WTC11 (cell line): ENCODE measurements at regions of chr15 and their contacts with region 1.

Region 1: DNA sequence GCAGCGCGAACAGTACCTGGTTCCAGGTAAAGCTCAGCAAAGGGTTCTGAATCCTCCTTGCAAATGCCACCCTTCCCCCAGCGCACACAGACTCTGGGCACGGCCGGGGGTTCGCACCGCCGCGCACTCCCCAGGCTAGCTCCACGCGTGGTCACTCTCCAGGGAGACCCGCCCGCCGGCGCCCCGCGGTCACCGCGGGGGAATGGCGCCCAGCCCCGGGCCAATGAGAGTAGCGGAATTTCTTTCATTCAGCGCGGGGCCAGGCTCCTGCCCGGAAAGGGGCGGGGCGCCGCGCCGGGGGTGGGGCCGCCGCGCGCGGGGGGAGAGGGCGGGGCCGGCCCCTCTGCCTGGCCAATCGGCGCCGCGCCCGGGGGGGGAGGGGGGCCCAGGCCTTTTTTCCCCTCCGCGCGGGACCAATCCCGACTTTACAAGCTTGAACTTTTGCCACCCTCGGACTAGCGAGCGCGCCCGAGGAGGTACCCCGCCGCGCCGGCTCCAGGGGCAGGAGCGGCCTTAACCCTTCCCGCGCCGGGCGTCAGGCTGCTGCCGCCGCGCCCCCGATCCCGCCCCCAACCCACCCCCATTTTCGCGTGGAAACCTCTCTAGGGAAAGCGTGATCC is 1.1 kb upstream of the SMAD6 start:
- DNase-seq: peak; percentile 93
- ATAC-seq: peak; percentile 55
- H3K4me3 Mint-ChIP-seq: peak overlapping the region; percentile 90
- H3K27ac Mint-ChIP-seq: 0 out of 2 replicates have a peak overlapping the region, but pooled peaks have one; percentile 12
- H3K4me1 Mint-ChIP-seq: peaks cover 37% of the 10 kb centered on the region
- H3K27me3 Mint-ChIP-seq: peaks cover 28% of the 10 kb centered on the region
- CTCF ChIP-seq: no peak

Region 2: DNA sequence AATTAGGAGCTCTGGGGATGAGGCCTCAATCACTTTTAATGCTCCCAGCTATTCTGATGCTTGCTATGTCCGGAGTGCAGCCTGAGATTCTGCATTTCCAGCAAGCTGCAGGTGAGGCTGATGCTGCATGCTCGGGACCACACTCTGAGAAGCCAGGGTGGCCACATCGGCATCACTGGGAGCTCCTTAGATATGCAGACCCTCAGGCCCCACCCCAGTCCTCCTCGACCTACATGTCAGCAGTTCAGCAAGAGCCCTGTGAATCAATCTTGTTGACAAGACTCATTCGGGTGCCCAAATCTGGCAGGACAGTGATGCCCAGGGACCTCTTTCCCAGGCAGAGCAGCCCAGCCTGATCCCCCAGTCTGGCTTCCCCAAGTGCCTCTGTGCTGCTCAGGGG is 91.0 kb before region 1 on chr15:
- CTCF ChIA-PET with region 1: interaction called, 11 read pairs
- POLR2A ChIA-PET with region 1: no interaction called
- DNase-seq: no peak
- ATAC-seq: peak; percentile 34; the same call in 1 of the 2 replicates
- H3K4me3 Mint-ChIP-seq: no peak overlapping the region
- H3K27ac Mint-ChIP-seq: no peak overlapping the region
- H3K4me1 Mint-ChIP-seq: peaks cover 5% of the 10 kb centered on the region; the same call in 1 of the 2 replicates
- H3K27me3 Mint-ChIP-seq: no peaks in the 10 kb centered on the region
- CTCF ChIP-seq: no peak

Region 3: GRCh38 chr15:66630801-66631351 is 70.0 kb before region 1 on chr15:
- CTCF ChIA-PET with region 1: interaction called, 14 read pairs
- POLR2A ChIA-PET with region 1: no interaction called
- DNase-seq: no peak
- ATAC-seq: no peak
- H3K4me3 Mint-ChIP-seq: no peak overlapping the region
- H3K27ac Mint-ChIP-seq: no peak overlapping the region
- H3K4me1 Mint-ChIP-seq: peaks cover 71% of the 10 kb centered on the region
- H3K27me3 Mint-ChIP-seq: no peaks in the 10 kb centered on the region
- CTCF ChIP-seq: no peak

Region 4: DNA sequence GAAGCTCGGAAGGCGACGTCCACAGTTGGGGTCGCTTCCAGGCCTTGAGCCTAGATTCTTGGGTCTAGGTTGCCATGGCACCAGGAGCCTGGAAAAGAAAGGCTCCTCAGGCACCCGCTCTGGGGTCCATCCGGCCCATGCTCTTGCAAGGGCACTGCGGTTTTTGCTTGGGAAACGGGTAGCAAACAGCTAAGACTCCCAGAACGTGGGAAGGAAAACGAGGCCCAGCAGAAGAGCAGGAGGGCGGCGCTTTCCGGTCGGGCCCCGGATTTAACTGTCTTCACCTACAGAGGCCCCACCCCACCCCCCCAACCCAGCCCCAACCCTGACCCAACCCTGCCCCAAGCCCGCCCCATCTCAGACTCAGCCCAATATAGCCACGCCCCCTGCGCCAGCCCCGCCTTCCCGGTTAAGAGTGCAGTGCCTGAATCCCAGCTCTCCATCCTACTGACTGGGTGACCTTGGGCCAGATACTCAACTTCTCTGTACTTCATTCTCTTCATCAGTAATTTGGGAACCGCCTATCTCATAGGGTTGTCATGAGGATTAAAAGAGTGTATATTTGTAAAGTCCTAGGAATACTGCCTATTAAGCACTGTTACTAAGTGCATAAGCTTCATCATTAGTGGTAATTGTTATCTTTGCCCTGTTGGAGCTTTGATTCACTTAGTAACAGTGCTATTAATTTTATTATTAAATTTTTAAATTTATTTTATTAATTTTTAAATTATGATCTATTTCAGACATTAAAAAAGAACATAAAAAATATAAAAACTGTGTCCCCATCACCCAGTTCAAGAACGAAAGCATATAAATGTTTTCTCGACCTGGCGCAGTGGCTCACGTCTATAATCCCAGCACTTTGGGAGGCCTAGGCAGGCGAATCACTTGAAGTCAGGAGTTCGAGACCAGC is 27.2 kb before region 1 on chr15:
- CTCF ChIA-PET with region 1: interaction called, 11 read pairs
- POLR2A ChIA-PET with region 1: no interaction called
- DNase-seq: peak; percentile 95
- ATAC-seq: peak; percentile 82
- H3K4me3 Mint-ChIP-seq: no peak overlapping the region
- H3K27ac Mint-ChIP-seq: no peak overlapping the region
- H3K4me1 Mint-ChIP-seq: peaks cover 29% of the 10 kb centered on the region
- H3K27me3 Mint-ChIP-seq: peaks cover 11% of the 10 kb centered on the region
- CTCF ChIP-seq: no peak

Region 5: GRCh38 chr15:66685638-66686150 is 15.2 kb before region 1 on chr15:
- CTCF ChIA-PET with region 1: interaction called, 14 read pairs
- POLR2A ChIA-PET with region 1: no interaction called
- DNase-seq: no peak
- ATAC-seq: peak; percentile 34; the same call in 1 of the 2 replicates
- H3K4me3 Mint-ChIP-seq: no peak overlapping the region
- H3K27ac Mint-ChIP-seq: no peak overlapping the region
- H3K4me1 Mint-ChIP-seq: no peaks in the 10 kb centered on the region
- H3K27me3 Mint-ChIP-seq: no peaks in the 10 kb centered on the region; the same call in 1 of the 2 replicates
- CTCF ChIP-seq: no peak

Region 6: GRCh38 chr15:66730168-66731021 is 29.5 kb after region 1 on chr15:
- CTCF ChIA-PET with region 1: no interaction called
- POLR2A ChIA-PET with region 1: no interaction called
- DNase-seq: no peak
- ATAC-seq: no peak
- H3K4me3 Mint-ChIP-seq: no peak overlapping the region
- H3K27ac Mint-ChIP-seq: no peak overlapping the region
- H3K4me1 Mint-ChIP-seq: peaks cover 30% of the 10 kb centered on the region
- H3K27me3 Mint-ChIP-seq: no peaks in the 10 kb centered on the region
- CTCF ChIP-seq: no peak

Region 7: DNA sequence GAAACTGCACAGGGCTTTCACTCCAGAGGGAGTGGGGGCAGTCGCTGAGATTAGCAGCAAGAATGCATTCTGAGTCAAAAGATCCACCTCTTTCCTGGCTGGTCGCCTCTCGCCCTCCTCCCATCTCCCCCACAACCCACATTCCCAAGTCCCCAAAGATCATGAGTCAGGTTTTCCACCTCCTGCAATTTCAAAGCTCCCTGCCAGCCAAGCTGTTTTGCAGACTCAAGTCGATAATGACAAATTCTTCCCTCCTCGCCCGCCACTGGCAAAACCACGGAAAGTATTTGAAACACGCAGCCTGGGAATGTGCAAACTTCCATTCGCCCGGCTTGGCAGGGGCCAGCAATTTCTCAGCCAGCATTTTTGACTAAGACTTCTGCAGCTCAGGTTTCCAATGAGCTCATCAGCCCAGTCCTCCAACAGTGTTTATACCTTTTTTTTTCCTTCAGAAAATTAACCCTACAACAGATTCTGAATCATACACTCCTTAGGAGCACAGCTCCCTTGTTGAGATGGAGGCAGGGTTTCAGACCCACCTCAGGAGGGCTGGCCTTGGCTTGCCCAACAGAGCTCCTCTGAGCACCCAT is 182.5 kb after region 1 on chr15:
- CTCF ChIA-PET with region 1: no interaction called
- POLR2A ChIA-PET with region 1: no interaction called
- DNase-seq: peak; percentile 56
- ATAC-seq: peak; percentile 84
- H3K4me3 Mint-ChIP-seq: no peak overlapping the region
- H3K27ac Mint-ChIP-seq: peak overlapping the region; percentile 84
- H3K4me1 Mint-ChIP-seq: peaks cover 20% of the 10 kb centered on the region
- H3K27me3 Mint-ChIP-seq: no peaks in the 10 kb centered on the region; the same call in 1 of the 2 replicates
- CTCF ChIP-seq: no peak